ENCODE measurements at regions of chrX and their contacts with region 1.

Region 1: GRCh38 chrX:65595460-65595876 is 60.9 kb upstream of the LAS1L start:
- DNase-seq: peak; percentile 90 to 93 (median 91)
- H3K4me3 ChIP-seq: peak overlapping the region in 1 of 2 donors; percentile 5
- H3K4me3 Mint-ChIP-seq: peak overlapping the region; percentile 37 to 88 (median 64)
- H3K27ac ChIP-seq: peak overlapping the region; percentile 62
- H3K27ac Mint-ChIP-seq: peak overlapping the region; percentile 89 to 98 (median 95)
- H3K4me1 ChIP-seq: peaks cover 52% of the 10 kb centered on the region
- H3K4me1 Mint-ChIP-seq: peaks cover 30 to 54% (median 46%) of the 10 kb centered on the region in 4 donors
- H3K27me3 ChIP-seq: no peaks in the 10 kb centered on the region
- H3K27me3 Mint-ChIP-seq: no peaks in the 10 kb centered on the region

Region 2: DNA sequence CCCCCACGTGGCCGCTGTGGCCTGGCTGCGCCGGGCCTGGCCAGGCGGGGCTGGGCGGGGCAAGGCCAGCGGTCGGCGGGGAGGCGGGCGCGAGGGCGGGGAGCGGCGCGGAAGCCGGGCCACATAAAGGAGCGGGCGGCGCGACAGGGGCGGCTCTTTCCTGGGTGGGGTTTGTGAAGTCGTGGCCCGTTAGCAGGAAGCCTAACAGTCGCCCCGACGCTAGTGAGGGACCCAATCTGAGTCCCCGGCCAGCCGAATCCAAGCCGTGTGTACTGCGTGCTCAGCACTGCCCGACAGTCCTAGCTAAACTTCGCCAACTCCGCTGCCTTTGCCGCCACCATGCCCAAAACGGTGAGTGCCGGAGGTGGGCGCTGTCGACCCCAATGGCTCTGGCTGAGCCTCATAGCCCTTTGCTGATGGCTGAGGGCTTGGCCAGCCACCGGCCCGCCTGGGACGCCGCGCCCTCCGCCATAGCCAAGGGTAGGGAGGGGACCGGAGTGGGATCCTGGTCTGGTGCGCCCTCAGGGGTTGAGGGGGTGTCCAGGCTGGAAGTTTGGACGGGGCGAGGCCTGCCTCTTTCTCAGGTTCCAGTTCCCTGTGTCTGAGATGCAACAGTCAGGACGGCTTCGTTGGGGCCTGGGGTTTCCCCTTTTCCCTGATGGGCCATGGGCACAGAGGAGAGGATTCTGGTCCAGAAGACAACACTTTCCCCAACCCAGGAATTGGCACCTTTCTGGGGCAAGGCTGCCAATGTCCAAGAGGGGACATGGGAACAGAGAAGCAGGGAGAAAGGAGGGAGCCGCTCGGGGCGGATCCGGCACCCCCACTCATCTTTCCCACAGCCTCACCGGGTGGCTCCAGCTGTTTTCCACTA is 72.3 kb after region 1 on chrX and contains the start of gene MSN:
- CTCF ChIA-PET with region 1: interaction called, 9 read pairs
- POLR2A ChIA-PET with region 1: interaction called, 19 read pairs
- intact Hi-C with region 1: loop called (anchors 1 kb)
- DNase-seq: peak; percentile 71 to 80 (median 75)
- H3K4me3 ChIP-seq: peak within 1 kb of the TSS; percentile 82 to 84
- H3K4me3 Mint-ChIP-seq: peak within 1 kb of the TSS; percentile 94 to 97 (median 95)
- H3K27ac ChIP-seq: peak within 1 kb of the TSS; percentile 78
- H3K27ac Mint-ChIP-seq: peak within 1 kb of the TSS; percentile 88 to 96 (median 94)
- H3K4me1 ChIP-seq: peaks cover 30% of the 10 kb centered on the region
- H3K4me1 Mint-ChIP-seq: peaks cover 23 to 59% (median 42%) of the 10 kb centered on the region in 4 donors
- H3K27me3 ChIP-seq: no peaks in the 10 kb centered on the region
- H3K27me3 Mint-ChIP-seq: no peaks in the 10 kb centered on the region
- total RNA-seq, gene MSN: 334 to 343 TPM

Region 3: DNA sequence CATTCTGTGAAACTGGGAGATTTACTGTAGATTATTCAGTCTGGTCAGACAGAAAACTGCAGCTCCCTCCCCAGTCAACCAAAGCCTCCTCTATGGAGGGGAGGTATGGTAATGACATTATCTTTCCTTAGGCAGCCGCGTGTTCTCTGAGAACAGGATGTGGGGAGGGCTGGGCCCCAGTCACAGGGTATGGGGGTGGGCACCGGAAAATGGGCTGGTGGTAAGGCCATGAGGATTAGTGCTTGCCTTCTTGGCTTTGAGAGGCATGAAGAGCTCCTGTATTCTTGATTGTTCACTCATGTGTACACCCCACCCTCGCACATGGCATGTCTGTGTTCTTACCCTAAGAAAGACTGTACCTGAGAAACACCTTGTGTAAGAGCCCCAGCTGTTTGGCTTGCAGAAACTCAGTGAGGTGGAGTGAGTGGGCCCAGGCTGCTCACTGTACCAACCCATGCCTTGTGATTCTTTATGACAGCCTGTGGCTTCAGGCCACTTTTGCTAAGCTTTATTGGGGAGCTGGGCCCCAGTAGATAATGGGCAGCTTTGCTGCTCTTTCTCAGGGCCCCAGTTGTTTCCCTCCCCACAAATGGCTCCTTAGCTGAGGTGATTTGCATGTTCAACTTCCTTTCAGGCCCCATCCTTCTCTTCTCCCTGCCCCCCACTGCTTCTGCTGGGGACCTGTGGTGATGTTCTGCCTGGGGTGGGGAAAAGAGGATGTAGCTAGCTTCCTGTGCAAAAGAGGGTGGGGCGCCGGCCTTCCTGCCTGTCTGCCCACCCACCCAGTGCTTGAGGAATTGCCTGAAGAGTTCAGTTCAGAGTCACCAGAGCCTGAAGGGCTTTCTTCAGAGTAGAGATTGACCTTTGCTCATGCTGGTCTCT is 102.7 kb after region 1 on chrX:
- CTCF ChIA-PET with region 1: interaction called, 16 read pairs
- POLR2A ChIA-PET with region 1: interaction called, 33 read pairs
- intact Hi-C with region 1: no loop called
- DNase-seq: peak; percentile 71 to 86 (median 76)
- H3K4me3 ChIP-seq: peak overlapping the region; percentile 31 to 38
- H3K4me3 Mint-ChIP-seq: peak overlapping the region; percentile 71 to 92 (median 84)
- H3K27ac ChIP-seq: peak overlapping the region; percentile 56
- H3K27ac Mint-ChIP-seq: peak overlapping the region; percentile 89 to 97 (median 95)
- H3K4me1 ChIP-seq: peaks cover 95% of the 10 kb centered on the region
- H3K4me1 Mint-ChIP-seq: peaks cover 53 to 99% (median 86%) of the 10 kb centered on the region in 4 donors
- H3K27me3 ChIP-seq: no peaks in the 10 kb centered on the region
- H3K27me3 Mint-ChIP-seq: no peaks in the 10 kb centered on the region

Region 4: GRCh38 chrX:65723706-65724105 is 128.2 kb after region 1 on chrX:
- CTCF ChIA-PET with region 1: interaction called, 5 read pairs
- POLR2A ChIA-PET with region 1: interaction called, 10 read pairs
- intact Hi-C with region 1: loop called (anchors 2 kb)
- DNase-seq: peak; percentile 30 to 75 (median 38)
- H3K4me3 ChIP-seq: peak overlapping the region in 1 of 2 donors; percentile 19
- H3K4me3 Mint-ChIP-seq: peak overlapping the region in 7 of 8 donors; percentile 19 to 83 (median 60)
- H3K27ac ChIP-seq: peak overlapping the region; percentile 64
- H3K27ac Mint-ChIP-seq: peak overlapping the region; percentile 87 to 95 (median 88)
- H3K4me1 ChIP-seq: peaks cover 91% of the 10 kb centered on the region
- H3K4me1 Mint-ChIP-seq: peaks cover 66 to 93% (median 82%) of the 10 kb centered on the region in 4 donors
- H3K27me3 ChIP-seq: no peaks in the 10 kb centered on the region
- H3K27me3 Mint-ChIP-seq: no peaks in the 10 kb centered on the region

Region 5: DNA sequence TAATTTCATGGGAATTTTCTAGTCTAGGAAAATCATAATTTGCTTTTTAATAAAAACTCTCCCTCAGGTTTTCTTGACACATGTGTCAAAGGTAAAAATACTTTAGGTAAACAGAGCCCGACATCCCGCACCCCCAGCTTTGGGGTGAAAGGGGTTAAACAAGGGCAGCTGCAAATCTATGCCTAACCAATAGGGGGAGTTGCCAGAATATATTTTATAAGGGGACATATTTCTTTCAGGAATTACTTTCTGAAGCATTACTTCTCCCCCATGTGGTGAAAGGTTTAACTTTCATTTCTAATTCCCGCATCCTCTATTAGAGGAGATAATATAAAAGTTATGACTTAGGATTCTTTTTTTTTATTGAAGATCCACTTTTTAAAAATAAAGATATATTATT is 514.6 kb after region 1 on chrX:
- CTCF ChIA-PET with region 1: no interaction called
- POLR2A ChIA-PET with region 1: no interaction called
- intact Hi-C with region 1: loop called (anchors 5 kb)
- DNase-seq: peak; percentile 12 to 23 (median 21)
- H3K4me3 ChIP-seq: no peak overlapping the region
- H3K4me3 Mint-ChIP-seq: no peak overlapping the region
- H3K27ac ChIP-seq: no peak overlapping the region
- H3K27ac Mint-ChIP-seq: no peak overlapping the region
- H3K4me1 ChIP-seq: no peaks in the 10 kb centered on the region
- H3K4me1 Mint-ChIP-seq: peaks cover 0 to 1% (median 0%) of the 10 kb centered on the region in 4 donors
- H3K27me3 ChIP-seq: no peaks in the 10 kb centered on the region
- H3K27me3 Mint-ChIP-seq: peaks cover 0 to 2% of the 10 kb centered on the region in 2 donors

Measured in CD4-positive, alpha-beta memory T cell (primary cell).